ENCODE measurements at regions of chr13 and their contacts with region 1.

Region 1: GRCh38 chr13:78497702-78498355 is 105.5 kb downstream of the POU4F1 start:
- DNase-seq: no peak

Region 2: GRCh38 chr13:76904507-76904906 is 1593.3 kb before region 1 on chr13:
- intact Hi-C with region 1: no loop called
- DNase-seq: no peak

Region 3: DNA sequence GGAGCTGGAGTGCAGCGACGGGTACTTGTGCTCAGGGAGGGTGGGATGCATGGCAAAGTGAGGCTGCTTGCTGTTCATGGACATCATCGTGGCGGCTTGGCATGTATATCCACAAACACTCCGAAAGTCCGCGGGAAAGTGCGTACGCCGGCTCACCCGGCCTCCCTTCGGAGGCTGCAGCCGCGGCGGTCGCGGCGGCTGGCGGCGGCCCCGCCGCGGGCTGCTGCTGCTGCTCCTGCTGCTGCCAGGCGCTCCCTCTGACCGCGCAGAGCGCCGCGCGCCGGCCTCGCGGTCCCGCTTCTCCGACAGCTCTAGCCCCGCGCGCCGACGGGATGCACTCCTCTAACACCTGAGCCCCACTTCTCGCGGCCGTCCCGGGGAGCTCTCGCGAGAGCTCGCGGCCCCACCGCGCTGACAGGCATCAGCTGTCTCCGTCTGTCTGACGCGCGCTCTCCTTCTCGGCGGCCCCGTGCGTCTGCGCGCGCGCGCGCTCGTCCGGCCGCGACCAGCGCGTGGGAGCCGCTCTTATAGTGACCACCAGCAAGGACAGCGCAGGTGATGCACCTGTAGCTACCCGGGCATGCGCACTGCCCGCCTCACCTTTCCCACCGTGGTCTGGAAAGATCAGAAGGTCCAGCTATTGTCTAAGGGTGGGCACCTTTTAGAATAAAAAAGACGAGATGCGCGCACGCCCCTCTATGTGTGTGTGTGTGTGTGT is 105.6 kb after region 1 on chr13 and contains the start of gene POU4F1:
- intact Hi-C with region 1: loop called in 1 of 2 experiments (anchors 5 kb)
- DNase-seq: no peak
- total RNA-seq, gene POU4F1: not detected